ENCODE measurements at regions of chr5 and their contacts with region 1.

Region 1: GRCh38 chr5:54249210-54250028 is 61.0 kb downstream of the ARL15 start:
- DNase-seq: peak; percentile 26 to 38
- H3K4me3 ChIP-seq: no peak overlapping the region
- H3K27ac ChIP-seq: no peak overlapping the region
- H3K4me1 ChIP-seq: peaks cover 0 to 19% (median 8%) of the 10 kb centered on the region in 4 donors
- H3K27me3 ChIP-seq: no peaks in the 10 kb centered on the region
- CTCF ChIP-seq: no peak
- EP300 ChIP-seq: no peak
- POLR2A ChIP-seq: no peak

Region 2: DNA sequence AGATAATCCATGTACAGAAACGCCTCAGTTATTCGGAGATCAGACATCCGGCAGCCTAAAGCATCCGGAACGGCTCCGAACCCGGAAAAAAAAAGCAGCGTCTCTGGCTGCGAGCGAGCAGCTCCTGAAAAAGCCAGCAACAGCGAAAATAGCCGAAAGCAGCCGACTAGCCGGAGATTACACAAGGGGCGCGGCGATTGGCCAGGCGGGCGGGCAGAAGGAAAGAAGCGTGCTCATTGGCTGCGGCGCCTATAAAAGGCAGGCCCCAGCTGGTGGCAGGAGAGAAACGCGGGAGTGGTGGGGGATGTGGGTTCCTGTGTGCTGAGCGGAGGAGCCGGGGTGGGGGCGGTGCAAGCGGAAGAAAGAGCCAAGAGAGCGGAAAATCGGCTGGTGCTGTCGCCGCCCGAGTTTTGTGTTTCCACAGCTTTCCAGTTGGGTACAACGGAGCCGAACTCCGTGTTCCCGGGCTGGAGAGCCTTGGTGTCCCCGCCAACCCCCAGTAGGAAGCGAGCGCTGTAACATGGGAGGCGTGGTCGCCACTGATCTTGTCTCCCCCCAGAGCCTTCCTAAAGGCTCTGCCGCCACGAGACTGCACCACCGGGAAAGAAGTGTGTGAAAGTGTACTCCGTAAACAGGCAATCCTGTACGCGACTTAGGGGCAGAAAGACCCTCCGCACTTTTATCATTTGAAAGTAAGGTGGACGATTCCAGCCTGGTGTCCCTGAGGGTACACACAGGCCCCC is 61.2 kb after region 1 on chr5 and contains the start of gene ARL15:
- intact Hi-C with region 1: loop called (anchors 10 kb)
- DNase-seq: peak; percentile 99
- H3K4me3 ChIP-seq: peak within 1 kb of the TSS; percentile 68 to 97 (median 86)
- H3K27ac ChIP-seq: peak within 1 kb of the TSS; percentile 86 to 97 (median 93)
- H3K4me1 ChIP-seq: peaks cover 18 to 42% (median 39%) of the 10 kb centered on the region in 4 donors
- H3K27me3 ChIP-seq: no peaks in the 10 kb centered on the region
- CTCF ChIP-seq: no peak
- EP300 ChIP-seq: no peak
- POLR2A ChIP-seq: peak in 2 of 4 donors; percentile 99
- total RNA-seq, gene ARL15: 1.7 to 72.7 (median 19.6) TPM

Region 3: DNA sequence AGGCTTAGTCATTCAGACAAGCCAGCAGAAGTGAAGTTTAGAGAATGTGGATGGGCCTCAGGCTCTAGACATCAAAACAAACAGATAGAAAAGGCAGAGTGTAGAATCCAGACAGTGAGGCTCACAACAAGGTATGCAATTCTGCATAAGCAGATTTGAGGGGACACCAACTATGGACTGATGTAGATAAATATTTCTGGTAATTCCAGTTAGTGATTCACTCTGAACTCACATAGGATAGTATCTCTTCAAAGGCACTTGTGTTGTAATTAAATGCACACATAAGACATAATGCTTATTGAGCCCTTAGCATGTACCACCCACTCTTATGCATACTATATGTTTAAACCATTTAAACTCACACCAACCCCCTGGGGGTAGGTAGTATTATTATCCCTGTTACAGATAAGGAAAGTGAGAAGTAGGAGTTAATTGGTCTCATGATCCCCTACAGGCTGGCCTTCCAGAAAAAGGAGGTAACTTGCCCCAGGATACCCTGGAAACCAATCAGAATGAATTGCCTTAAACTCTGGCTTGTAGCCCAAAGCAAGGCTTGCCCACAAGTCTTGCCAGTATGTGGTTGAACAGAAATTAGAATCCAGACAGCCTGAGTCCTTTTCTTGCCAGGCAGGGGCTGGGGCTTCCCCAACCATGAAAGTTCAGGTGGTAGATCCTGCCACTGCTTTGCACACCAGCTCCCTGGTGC is 166.6 kb after region 1 on chr5:
- intact Hi-C with region 1: loop called (anchors 5 kb)
- DNase-seq: no peak
- H3K4me3 ChIP-seq: no peak overlapping the region
- H3K27ac ChIP-seq: no peak overlapping the region
- H3K4me1 ChIP-seq: no peaks in the 10 kb centered on the region
- H3K27me3 ChIP-seq: peaks cover 0 to 4% (median 0%) of the 10 kb centered on the region in 3 donors
- CTCF ChIP-seq: no peak
- EP300 ChIP-seq: no peak
- POLR2A ChIP-seq: no peak

Measured in stomach (tissue), 19 donors.